Activated B cell treated with CpG ODN at 0.5 μM for 24 hours (primary cell): ENCODE measurements at regions of chr1 and their contacts with region 1.

Region 1: GRCh38 chr1:162056043-162056442 is 13.4 kb upstream of the NOS1AP start:
- DNase-seq: no peak
- ATAC-seq: peak; percentile 64
- H3K4me3 Mint-ChIP-seq: no peak overlapping the region
- H3K27ac Mint-ChIP-seq: no peak overlapping the region
- H3K4me1 Mint-ChIP-seq: no peaks in the 10 kb centered on the region
- H3K27me3 Mint-ChIP-seq: peaks cover 24% of the 10 kb centered on the region
- CTCF ChIP-seq: no peak

Region 2: GRCh38 chr1:162028726-162029125 is 27.3 kb before region 1 on chr1:
- CTCF ChIA-PET with region 1: no interaction called
- POLR2A ChIA-PET with region 1: no interaction called
- intact Hi-C with region 1: no loop called
- DNase-seq: no peak
- ATAC-seq: peak; percentile 31
- H3K4me3 Mint-ChIP-seq: no peak overlapping the region
- H3K27ac Mint-ChIP-seq: no peak overlapping the region
- H3K4me1 Mint-ChIP-seq: peaks cover 7% of the 10 kb centered on the region
- H3K27me3 Mint-ChIP-seq: peaks cover 40% of the 10 kb centered on the region
- CTCF ChIP-seq: no peak

Region 3: GRCh38 chr1:162276493-162276892 is 220.4 kb after region 1 on chr1:
- CTCF ChIA-PET with region 1: no interaction called
- POLR2A ChIA-PET with region 1: no interaction called
- intact Hi-C with region 1: loop called (anchors 2 kb)
- DNase-seq: no peak
- ATAC-seq: no peak
- H3K4me3 Mint-ChIP-seq: no peak overlapping the region
- H3K27ac Mint-ChIP-seq: no peak overlapping the region
- H3K4me1 Mint-ChIP-seq: no peaks in the 10 kb centered on the region
- H3K27me3 Mint-ChIP-seq: peaks cover 8% of the 10 kb centered on the region
- CTCF ChIP-seq: no peak

Region 4: DNA sequence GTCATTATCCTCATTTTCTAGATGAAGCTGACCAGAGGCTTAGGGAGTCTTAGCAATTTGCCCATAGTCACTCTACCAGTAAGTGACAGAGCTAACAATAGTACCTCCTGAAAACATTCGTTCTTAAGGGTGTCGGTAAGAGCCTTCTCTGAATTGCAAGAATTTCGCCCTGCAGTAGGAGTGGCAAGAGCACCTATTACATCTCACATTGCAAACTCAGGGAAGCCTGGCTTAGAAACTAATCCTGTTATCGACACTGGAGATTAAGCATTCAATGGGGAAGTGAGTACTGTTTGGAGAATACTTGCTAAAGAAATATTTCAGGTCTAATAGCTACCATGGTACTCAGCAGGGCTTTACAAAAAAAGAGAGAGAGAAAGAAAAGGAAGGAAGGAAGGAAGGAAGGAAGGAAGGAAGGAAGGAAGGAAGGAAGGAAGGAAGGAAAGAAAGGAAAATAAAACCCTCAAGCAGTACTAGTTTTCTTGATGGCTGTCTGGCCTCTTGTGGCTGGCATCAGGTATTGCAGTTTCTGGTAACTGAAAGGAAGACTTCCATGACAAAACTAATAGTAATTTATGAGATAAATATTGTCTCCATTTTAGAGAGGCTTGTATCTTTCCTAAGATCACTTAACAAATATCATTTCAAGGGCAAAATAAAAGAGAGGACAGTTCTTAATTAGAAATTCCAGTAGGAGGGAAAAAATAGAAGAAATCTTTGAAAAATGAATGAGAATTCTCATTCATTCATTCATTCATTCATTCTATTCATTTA is 335.9 kb after region 1 on chr1:
- CTCF ChIA-PET with region 1: interaction called, 17 read pairs
- POLR2A ChIA-PET with region 1: no interaction called
- intact Hi-C with region 1: no loop called
- DNase-seq: no peak
- ATAC-seq: no peak
- H3K4me3 Mint-ChIP-seq: no peak overlapping the region
- H3K27ac Mint-ChIP-seq: no peak overlapping the region
- H3K4me1 Mint-ChIP-seq: peaks cover 8% of the 10 kb centered on the region
- H3K27me3 Mint-ChIP-seq: peaks cover 14% of the 10 kb centered on the region
- CTCF ChIP-seq: no peak

Region 5: DNA sequence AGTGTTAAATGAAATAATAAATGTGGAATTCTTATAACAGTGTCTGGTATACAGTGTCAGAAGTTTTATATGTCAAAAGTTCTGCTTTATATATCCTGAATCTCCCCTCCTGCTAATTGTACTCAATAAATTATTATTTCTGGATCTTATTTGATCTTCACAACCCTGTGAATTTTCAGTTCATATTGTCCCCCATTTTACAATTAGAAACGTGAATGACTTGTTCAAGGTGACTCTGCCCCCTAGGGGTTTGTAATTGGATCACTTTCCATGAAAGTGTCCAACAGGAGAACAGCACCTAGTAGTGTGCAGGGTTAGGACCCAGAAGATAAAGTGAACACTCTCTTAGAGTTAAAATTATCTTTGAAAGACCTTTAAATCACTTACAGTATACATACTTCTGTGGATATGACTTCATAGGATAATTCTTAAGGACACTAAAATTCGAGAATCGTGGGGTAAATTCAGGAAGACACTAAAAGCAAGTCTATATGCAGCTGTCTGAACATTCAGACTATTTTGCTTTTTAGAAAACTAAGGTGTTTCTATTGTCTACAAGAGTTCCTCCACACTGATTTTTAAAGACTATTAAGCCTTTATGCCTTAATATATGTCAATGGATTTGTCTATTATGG is 571.7 kb after region 1 on chr1:
- CTCF ChIA-PET with region 1: no interaction called
- POLR2A ChIA-PET with region 1: no interaction called
- intact Hi-C with region 1: loop called (anchors 1 kb)
- DNase-seq: no peak
- ATAC-seq: no peak
- H3K4me3 Mint-ChIP-seq: no peak overlapping the region
- H3K27ac Mint-ChIP-seq: no peak overlapping the region
- H3K4me1 Mint-ChIP-seq: no peaks in the 10 kb centered on the region
- H3K27me3 Mint-ChIP-seq: peaks cover 27% of the 10 kb centered on the region
- CTCF ChIP-seq: no peak

Region 6: DNA sequence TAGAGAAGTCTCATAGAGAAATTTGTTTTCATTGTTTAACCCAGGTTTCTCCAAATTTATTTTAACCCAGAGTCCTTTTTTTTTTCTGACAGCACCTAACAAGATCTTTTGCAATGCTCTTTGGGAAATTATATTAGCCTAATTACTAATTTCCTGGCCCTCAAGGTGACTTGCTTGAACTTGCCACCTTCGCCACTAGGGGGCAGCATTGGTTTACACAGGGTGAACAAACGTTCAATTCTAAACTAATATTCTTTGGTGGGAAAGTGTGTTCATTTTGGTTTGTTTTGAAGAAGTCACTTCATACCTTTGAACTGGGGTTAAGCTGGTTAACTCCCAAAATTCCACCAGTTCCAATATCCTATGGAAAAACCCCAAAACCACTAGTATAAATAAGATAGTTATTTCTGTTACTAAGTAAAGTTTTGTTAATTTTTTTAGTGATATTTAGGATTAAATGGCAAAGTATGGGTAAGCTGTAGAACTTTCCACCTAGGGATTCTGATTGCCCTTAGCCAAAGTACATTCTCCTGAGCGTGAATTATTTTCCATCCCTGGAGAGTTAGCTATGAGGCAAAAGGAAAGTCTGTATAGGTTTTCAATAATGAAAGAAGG is 791.9 kb after region 1 on chr1:
- CTCF ChIA-PET with region 1: no interaction called
- POLR2A ChIA-PET with region 1: no interaction called
- intact Hi-C with region 1: loop called (anchors 5 kb)
- DNase-seq: peak; percentile 53
- ATAC-seq: no peak
- H3K4me3 Mint-ChIP-seq: no peak overlapping the region
- H3K27ac Mint-ChIP-seq: no peak overlapping the region
- H3K4me1 Mint-ChIP-seq: no peaks in the 10 kb centered on the region
- H3K27me3 Mint-ChIP-seq: peaks cover 15% of the 10 kb centered on the region
- CTCF ChIP-seq: peak; percentile 68